Activated T-helper 1 cell treated with anti-CD3 and anti-CD28 coated beads, Interleukin-12 subunit alpha, Interleukin-12 subunit beta, Interleukin-2, Interleukin-4 antibody, amounts not matched to agents 30 ng/mL and 10 ng/mL and 1 ng/mL, durations not matched to agents 14 hours and 24 hours and 36 hours (primary cell): ENCODE measurements at regions of chr6 and their contacts with region 1.

Region 1: GRCh38 chr6:108896111-108896661 is 48.0 kb downstream of the ARMC2 start:
- DNase-seq: no peak
- H3K4me3 Mint-ChIP-seq: peak overlapping the region; percentile 61
- H3K27ac Mint-ChIP-seq: peak overlapping the region; percentile 87
- H3K4me1 Mint-ChIP-seq: peaks cover 50% of the 10 kb centered on the region
- H3K27me3 Mint-ChIP-seq: peaks cover 13% of the 10 kb centered on the region

Region 2: DNA sequence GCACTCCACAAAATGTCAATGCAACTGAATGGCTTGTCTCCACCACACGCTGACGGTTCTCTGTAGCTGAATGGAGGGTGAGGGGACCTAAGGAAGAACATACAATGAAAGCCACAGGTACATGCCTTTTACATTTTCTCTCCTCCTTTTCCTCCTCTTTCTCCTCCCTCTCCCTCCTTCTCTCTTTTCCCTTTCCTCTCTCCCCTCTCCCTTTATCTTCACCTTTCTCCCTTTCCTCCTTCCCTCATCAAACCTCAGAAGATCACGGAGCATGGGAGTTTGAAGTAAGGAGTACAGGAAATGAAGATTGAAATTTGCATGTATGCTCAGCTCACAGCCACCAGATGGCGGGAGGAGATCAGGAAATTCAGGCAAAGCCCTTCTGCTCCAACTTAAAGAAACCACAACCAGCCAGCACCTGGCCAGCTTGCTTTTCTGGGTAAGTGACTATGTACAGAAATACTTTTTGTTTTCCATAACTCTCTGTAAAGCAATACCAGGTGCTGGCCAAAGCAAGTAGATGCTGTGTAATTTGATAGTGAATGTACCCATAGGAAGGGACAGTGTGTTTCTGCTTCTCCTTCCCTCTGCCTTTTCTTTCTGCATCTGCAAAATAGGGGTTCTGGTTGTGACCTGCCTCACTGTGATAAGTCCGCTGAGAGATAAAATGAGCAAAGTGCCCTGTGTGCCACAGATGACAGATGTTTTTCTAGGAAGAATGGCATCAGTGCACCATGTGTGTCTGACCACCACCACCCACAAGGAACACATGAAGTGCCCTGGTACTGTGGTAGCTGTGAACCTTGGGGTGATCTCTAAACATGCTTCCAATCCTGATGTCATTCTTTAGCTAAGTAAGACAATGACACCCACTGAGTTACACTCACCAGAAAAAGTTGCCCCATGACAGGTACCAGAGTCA is 354.1 kb before region 1 on chr6:
- intact Hi-C with region 1: loop called (anchors 1 kb)
- DNase-seq: peak; percentile 52
- H3K4me3 Mint-ChIP-seq: no peak overlapping the region
- H3K27ac Mint-ChIP-seq: no peak overlapping the region
- H3K4me1 Mint-ChIP-seq: peaks cover 10% of the 10 kb centered on the region
- H3K27me3 Mint-ChIP-seq: peaks cover 39% of the 10 kb centered on the region

Region 3: DNA sequence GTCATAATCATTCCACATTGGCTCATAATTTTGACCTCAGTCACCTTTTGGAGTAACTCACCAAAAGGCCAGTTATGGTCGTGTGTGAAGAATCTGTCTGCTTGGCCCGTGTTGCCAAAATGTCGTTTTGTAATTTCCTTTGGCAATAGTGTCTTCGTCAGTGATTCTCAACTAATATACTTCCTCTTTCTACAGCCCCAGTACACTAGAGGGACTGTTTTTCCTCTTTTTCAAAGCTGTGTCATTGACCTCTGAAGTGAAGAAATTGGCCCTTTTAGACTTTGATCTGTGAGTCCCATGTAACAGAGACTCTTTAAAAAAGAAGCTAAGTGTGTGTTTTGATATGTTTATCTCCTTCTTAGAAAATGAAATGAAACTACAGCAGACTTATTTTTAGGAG is 330.3 kb before region 1 on chr6:
- intact Hi-C with region 1: loop called (anchors 1 kb)
- DNase-seq: no peak
- H3K4me3 Mint-ChIP-seq: no peak overlapping the region
- H3K27ac Mint-ChIP-seq: no peak overlapping the region
- H3K4me1 Mint-ChIP-seq: peaks cover 36% of the 10 kb centered on the region
- H3K27me3 Mint-ChIP-seq: peaks cover 51% of the 10 kb centered on the region

Region 4: DNA sequence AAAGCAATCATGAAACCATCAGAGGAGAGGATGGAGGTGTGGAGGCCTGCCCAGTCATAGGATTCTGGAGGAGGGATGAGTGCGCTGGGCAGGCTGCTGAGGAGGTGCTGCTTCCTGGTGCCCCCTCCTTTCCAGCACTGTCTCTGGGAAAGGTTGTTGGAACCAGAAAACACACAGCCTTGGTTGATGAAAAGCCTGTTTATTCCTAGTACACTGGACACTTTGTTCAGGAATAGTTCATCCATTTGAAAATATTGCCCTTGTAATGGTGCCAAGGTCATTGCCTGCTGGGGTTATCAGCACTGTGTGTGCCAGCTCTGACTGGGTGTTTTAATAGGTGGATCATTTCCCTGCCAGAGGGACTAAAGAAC is 131.6 kb before region 1 on chr6:
- intact Hi-C with region 1: no loop called
- DNase-seq: no peak
- H3K4me3 Mint-ChIP-seq: no peak overlapping the region
- H3K27ac Mint-ChIP-seq: no peak overlapping the region
- H3K4me1 Mint-ChIP-seq: peaks cover 10% of the 10 kb centered on the region
- H3K27me3 Mint-ChIP-seq: peaks cover 16% of the 10 kb centered on the region

Region 5: DNA sequence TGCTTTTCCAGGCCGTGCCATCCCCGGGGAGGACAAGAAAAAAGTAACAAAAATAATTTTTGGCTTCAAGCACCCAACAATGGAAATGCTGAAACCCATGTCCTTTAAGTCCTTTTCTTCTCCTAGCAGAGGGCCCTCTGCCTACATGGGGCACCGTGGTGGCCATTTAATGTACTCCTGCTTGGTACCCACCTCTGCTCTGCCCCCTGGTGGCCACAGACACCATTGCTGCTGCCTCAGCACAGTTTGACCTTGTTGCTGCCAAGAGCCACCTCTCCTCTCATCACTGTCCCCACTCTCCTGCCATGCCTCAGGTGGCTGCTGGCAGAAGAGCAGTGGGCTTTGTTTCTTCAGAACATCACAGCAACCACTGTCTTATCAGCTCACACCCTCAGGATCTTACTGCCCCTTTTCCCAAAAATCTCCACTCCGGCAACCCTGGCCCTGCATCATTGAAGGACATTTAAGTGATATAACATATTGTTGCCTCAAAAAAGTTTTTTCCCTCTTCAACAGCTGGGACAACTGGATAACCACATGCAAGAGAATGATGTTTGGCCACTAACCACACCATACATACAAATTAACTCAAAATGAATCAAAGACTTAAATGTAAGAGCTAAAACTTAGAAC is 60.9 kb before region 1 on chr6:
- intact Hi-C with region 1: loop called (anchors 1 kb)
- DNase-seq: peak; percentile 74
- H3K4me3 Mint-ChIP-seq: no peak overlapping the region
- H3K27ac Mint-ChIP-seq: no peak overlapping the region
- H3K4me1 Mint-ChIP-seq: peaks cover 32% of the 10 kb centered on the region
- H3K27me3 Mint-ChIP-seq: peaks cover 16% of the 10 kb centered on the region

Region 6: DNA sequence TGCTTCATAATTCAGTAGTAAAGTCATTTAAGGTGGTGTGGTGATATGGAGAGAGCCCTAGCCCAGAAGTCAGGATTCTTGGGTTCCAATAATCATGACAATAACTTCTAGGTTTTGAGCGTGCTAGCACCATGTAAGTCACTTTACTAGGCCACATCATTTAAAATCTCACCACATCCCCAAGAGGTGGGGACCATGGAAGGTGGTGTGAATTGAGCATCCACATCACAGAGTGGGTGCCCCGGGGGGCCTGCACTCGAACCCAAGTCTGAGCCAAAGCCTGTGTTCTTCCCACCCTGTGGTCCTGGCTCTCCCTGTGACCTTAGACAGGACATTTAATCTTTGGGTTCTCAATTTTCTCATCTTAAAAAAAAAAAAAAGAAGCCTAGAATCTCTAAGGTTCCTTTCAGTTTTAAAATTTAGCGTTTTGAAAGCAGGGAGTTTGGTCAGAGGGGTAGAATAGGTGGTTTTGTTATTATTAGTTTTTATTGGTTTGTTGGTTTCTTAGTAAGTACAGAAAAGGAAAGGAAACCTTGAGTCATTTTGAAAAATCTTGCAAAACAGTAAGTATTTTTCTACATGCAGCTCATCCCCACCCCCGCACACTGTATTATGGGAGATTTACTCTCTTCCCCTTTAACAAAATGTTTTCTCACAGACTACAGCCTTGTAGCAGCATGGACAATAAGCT is 21.6 kb before region 1 on chr6:
- intact Hi-C with region 1: loop called (anchors 1 kb)
- DNase-seq: peak; percentile 51
- H3K4me3 Mint-ChIP-seq: peak overlapping the region; percentile 34
- H3K27ac Mint-ChIP-seq: peak overlapping the region; percentile 96
- H3K4me1 Mint-ChIP-seq: peaks cover 80% of the 10 kb centered on the region
- H3K27me3 Mint-ChIP-seq: peaks cover 4% of the 10 kb centered on the region

Region 7: DNA sequence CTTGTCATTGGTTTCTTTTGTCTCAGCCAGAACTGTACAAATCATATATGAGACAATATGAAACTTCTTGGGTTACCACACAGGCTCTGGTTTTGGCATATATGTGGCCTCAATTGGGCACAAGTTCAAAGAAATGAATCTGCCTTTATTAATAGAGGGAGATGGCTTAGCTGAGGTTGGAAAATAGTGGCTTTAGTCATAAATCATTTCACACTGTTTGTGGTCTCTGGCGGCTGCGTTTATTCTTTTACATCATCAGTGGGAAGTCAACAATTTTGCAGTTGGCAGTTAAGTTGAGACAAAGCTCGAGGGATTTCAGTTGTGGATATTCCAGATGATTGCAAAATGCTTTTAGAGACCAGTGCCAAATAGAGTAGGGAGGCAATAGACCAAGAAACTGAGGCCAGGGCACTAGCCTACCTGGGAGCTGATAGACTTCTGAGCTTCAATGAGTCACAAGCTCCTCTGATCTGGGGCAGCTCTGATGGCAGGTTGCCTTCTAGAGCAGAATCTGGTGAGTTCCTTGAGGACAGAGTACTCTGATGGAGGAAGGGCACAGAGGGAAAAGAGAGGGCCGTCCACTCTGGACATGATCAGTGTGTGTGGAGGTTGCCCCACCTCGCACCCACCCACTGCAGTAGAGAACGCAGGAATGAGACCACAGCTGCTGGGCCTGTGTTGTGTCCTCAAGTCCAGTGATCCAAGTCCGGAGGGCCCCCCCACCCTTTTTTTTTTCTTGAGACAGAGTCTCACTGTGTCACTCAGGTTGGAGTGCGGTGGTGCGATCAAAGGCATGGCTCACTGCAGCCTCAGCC is 25.6 kb after region 1 on chr6:
- intact Hi-C with region 1: loop called (anchors 1 kb)
- DNase-seq: no peak
- H3K4me3 Mint-ChIP-seq: peak overlapping the region; percentile 8
- H3K27ac Mint-ChIP-seq: peak overlapping the region; percentile 63
- H3K4me1 Mint-ChIP-seq: peaks cover 34% of the 10 kb centered on the region
- H3K27me3 Mint-ChIP-seq: peaks cover 22% of the 10 kb centered on the region

Region 8: DNA sequence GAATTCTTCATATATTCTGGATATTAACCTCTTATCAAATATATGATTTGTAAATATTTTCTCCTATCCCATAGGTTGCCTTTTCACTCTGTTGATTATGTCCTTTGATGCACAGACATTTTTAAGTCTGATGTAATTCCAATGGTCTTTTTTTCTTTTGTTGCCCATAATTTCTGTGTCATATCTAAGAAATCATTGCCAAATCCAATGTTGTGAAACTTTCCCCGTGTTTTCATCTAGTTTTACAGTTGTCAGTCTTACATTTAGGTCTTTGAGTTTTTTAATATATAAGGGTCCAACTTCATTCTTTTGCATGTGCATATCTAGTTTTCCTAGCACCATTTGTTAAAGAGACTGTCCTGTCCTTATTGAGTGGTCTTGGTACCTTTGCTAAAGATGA is 87.0 kb after region 1 on chr6:
- intact Hi-C with region 1: no loop called
- DNase-seq: no peak
- H3K4me3 Mint-ChIP-seq: no peak overlapping the region
- H3K27ac Mint-ChIP-seq: no peak overlapping the region
- H3K4me1 Mint-ChIP-seq: peaks cover 4% of the 10 kb centered on the region
- H3K27me3 Mint-ChIP-seq: peaks cover 10% of the 10 kb centered on the region

Region 9: DNA sequence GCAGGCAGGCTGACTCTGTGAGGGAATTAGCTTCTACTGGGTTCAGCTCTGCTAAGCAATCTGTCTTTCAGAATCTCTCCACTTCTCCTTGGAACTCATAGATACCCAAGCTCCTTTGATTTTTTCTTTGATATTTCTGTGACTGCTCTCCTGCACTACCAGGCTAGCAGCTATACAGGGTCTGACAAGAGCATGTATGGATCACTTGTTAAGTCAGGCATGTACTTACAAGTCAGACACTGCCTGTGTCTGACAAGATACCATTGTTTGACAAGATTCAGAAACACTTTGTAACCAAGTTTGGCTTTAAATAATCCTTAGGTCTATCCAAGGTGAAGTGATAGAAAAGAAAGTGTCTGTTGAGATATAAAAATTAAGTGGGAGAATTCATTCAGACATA is 119.0 kb after region 1 on chr6:
- intact Hi-C with region 1: no loop called
- DNase-seq: no peak
- H3K4me3 Mint-ChIP-seq: no peak overlapping the region
- H3K27ac Mint-ChIP-seq: no peak overlapping the region
- H3K4me1 Mint-ChIP-seq: peaks cover 13% of the 10 kb centered on the region
- H3K27me3 Mint-ChIP-seq: peaks cover 5% of the 10 kb centered on the region

Region 10: GRCh38 chr6:109073344-109074132 is 177.4 kb after region 1 on chr6:
- intact Hi-C with region 1: loop called (anchors 1 kb)
- DNase-seq: peak; percentile 31
- H3K4me3 Mint-ChIP-seq: no peak overlapping the region
- H3K27ac Mint-ChIP-seq: no peak overlapping the region
- H3K4me1 Mint-ChIP-seq: peaks cover 21% of the 10 kb centered on the region
- H3K27me3 Mint-ChIP-seq: peaks cover 12% of the 10 kb centered on the region

Region 11: GRCh38 chr6:109743739-109744138 is 847.6 kb after region 1 on chr6:
- intact Hi-C with region 1: no loop called
- DNase-seq: no peak
- H3K4me3 Mint-ChIP-seq: no peak overlapping the region
- H3K27ac Mint-ChIP-seq: no peak overlapping the region
- H3K4me1 Mint-ChIP-seq: no peaks in the 10 kb centered on the region
- H3K27me3 Mint-ChIP-seq: no peaks in the 10 kb centered on the region